ENCODE measurements at regions of chr20 and their contacts with region 1.

Region 1: DNA sequence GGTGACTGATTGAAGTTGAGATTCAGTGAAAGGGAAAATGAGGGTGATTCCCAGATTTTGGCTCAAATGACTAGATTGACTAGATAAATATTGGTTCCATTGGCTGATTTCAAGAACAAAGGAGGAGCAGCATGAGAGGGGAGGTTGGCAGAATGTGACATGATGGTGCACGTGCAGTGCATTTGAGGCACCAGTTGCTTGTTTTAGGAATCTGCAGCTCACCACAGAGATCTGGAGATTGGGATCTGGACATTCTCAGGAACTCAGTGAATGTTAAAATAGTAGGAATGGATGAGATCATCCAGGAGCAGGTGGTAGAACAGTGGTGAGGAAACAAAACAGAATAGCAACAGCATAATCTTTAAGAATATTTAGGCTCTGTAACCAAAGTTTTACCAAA is 496.3 kb downstream of the DHX35 start:
- DNase-seq: no peak
- H3K4me3 ChIP-seq: no peak overlapping the region
- H3K27ac ChIP-seq: no peak overlapping the region
- H3K4me1 ChIP-seq: no peaks in the 10 kb centered on the region
- H3K27me3 ChIP-seq: no peaks in the 10 kb centered on the region
- CTCF ChIP-seq: no peak

Region 2: DNA sequence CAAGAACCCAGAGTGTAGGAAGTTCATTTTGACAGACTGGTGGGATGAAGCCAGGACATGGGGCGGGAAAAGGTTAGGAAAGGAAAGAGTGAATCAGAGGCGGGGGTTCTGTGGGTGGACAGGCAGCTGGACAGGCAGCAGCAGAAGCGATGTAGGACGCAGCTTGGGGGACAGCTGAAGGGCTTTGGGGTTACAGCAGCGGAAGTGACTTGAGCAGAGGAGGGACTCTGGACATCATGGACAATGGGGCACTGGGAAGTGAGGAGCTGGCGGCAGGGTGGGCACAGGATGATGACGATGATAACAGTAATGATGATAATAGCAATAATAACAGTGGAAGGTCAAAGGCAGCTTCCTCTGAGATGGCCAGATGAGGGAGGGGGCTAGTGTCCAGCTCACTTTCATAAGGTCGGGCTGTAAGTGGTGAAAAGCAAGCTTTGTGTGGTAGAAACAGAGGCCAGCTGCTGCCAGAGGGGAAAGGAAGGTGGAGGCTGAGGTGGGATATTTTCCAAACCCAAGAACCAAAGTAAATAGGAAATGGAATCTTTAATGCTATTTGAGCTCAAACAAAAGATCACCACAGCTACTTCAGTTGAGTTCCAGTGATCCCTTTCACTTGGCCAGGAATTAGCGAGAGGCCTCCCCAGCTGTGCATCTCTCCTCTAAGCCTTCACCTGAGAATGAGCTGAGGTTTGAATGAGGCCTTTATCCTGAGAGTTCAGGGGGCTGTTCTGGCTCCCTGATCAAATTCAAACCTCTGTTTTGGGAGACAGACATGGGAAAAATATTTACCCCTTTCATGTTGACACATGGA is 62.8 kb before region 1 on chr20:
- intact Hi-C with region 1: no loop called
- DNase-seq: no peak
- H3K4me3 ChIP-seq: no peak overlapping the region
- H3K27ac ChIP-seq: no peak overlapping the region
- H3K4me1 ChIP-seq: no peaks in the 10 kb centered on the region
- H3K27me3 ChIP-seq: no peaks in the 10 kb centered on the region
- CTCF ChIP-seq: no peak

Region 3: DNA sequence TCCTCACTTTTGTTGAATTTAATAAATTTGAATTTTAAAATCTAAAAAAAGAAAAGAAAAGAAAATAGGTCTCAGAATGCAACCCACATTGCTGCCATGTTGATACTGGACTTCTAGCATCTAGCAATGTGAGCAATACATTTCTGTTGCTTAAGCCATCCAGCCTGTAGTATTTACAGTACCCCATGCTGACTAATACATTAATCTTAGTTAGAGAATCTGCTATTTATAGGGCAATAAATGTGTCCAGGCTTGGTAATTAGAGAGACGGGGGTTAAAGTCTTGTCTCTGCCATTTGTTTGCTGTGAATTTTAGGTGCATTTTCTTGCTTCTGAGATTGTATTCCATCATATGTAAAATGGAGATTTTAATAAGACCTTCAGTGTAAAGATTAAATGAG is 25.0 kb before region 1 on chr20:
- intact Hi-C with region 1: loop called (anchors 1 kb)
- DNase-seq: no peak
- H3K4me3 ChIP-seq: no peak overlapping the region
- H3K27ac ChIP-seq: no peak overlapping the region
- H3K4me1 ChIP-seq: no peaks in the 10 kb centered on the region
- H3K27me3 ChIP-seq: no peaks in the 10 kb centered on the region
- CTCF ChIP-seq: no peak

Region 4: GRCh38 chr20:39592371-39592770 is 133.9 kb after region 1 on chr20:
- intact Hi-C with region 1: no loop called
- DNase-seq: no peak
- H3K4me3 ChIP-seq: no peak overlapping the region
- H3K27ac ChIP-seq: no peak overlapping the region
- H3K4me1 ChIP-seq: no peaks in the 10 kb centered on the region
- H3K27me3 ChIP-seq: no peaks in the 10 kb centered on the region
- CTCF ChIP-seq: no peak